Left cardiac atrium (tissue), 4 donors: ENCODE measurements at regions of chr9 and their contacts with region 1.

Region 1: GRCh38 chr9:33125871-33126822 is 41.0 kb downstream of the B4GALT1 start:
- DNase-seq: no peak
- ATAC-seq: peak; percentile 39 to 67

Region 2: GRCh38 chr9:32986971-32987370 is 139.2 kb before region 1 on chr9:
- intact Hi-C with region 1: no loop called
- DNase-seq: no peak
- ATAC-seq: peak in 1 of 2 donors; percentile 36

Region 3: GRCh38 chr9:33092634-33093033 is 33.5 kb before region 1 on chr9:
- intact Hi-C with region 1: no loop called
- DNase-seq: no peak
- ATAC-seq: no peak

Region 4: GRCh38 chr9:33159760-33160127 is 33.6 kb after region 1 on chr9:
- intact Hi-C with region 1: loop called in 1 of 2 experiments (anchors 5 kb)
- DNase-seq: peak; percentile 52
- ATAC-seq: peak; percentile 12 to 19